CD4-positive, alpha-beta T cell (primary cell): ENCODE measurements at regions of chr21 and their contacts with region 1.

Region 1: DNA sequence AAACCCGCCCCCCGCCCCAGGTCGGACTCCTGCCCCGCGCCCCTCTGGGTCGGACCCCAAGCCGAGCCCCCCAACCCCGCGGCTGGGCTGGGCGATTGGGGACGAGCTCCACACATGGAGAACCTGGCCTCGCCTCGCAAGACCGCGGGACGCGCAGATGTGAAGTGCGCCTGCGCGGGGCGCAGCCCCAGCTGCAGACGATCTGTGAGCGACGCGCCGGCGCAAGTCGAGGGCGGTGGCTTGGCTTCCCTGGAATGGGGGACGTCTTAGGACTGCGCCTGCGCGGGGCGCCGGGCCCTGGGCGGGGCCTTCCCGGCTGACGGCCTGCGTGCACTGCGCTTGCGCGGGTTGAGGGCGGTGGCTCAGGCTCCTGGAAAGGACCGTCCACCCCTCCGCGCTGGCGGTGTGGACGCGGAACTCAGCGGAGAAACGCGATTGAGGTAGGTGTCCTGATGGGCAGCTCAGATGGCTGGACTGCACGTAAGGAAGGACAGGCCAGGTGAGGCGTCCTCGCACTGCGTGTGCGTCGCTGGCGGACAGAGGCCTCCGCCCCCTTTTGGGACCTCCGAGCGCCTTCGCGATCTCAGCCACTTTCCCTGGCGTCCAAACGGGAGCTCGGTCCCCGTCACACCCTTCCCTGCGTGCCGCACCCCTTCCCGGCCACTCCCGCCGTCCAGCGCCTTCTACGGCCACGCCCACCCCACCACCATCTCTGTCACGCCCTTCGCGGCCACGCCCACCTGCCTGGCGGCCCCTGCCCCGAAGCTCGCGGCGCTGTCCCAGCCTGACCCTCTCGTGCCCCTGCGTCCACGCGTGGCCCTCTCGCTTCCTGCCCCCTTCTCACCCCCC is at the start of gene PRMT2:
- DNase-seq: peak; percentile 94 to 99 (median 98)
- ATAC-seq: peak; percentile 84
- H3K4me3 ChIP-seq: peak within 1 kb of the TSS; percentile 100
- H3K4me3 Mint-ChIP-seq: peak within 1 kb of the TSS; percentile 100
- H3K27ac ChIP-seq: peak within 1 kb of the TSS; percentile 94 to 97
- H3K27ac Mint-ChIP-seq: peak within 1 kb of the TSS; percentile 97
- H3K4me1 ChIP-seq: peaks cover 38% of the 10 kb centered on the region
- H3K4me1 Mint-ChIP-seq: peaks cover 86% of the 10 kb centered on the region
- H3K27me3 ChIP-seq: no peaks in the 10 kb centered on the region
- H3K27me3 Mint-ChIP-seq: no peaks in the 10 kb centered on the region
- CTCF ChIP-seq: no peak
- total RNA-seq, gene PRMT2: 97.1 to 101 TPM

Region 2: GRCh38 chr21:46500224-46500856 is 135.2 kb before region 1 on chr21:
- CTCF ChIA-PET with region 1: interaction called, 8 read pairs
- POLR2A ChIA-PET with region 1: interaction called, 12 read pairs
- intact Hi-C with region 1: no loop called
- DNase-seq: peak in 2 of 14 experiments; percentile 19 to 56
- ATAC-seq: peak; percentile 60
- H3K4me3 ChIP-seq: no peak overlapping the region
- H3K4me3 Mint-ChIP-seq: no peak overlapping the region
- H3K27ac ChIP-seq: peak overlapping the region; percentile 4 to 14
- H3K27ac Mint-ChIP-seq: peak overlapping the region; percentile 57
- H3K4me1 ChIP-seq: peaks cover 17% of the 10 kb centered on the region
- H3K4me1 Mint-ChIP-seq: peaks cover 35% of the 10 kb centered on the region
- H3K27me3 ChIP-seq: no peaks in the 10 kb centered on the region
- H3K27me3 Mint-ChIP-seq: no peaks in the 10 kb centered on the region
- CTCF ChIP-seq: no peak

Region 3: DNA sequence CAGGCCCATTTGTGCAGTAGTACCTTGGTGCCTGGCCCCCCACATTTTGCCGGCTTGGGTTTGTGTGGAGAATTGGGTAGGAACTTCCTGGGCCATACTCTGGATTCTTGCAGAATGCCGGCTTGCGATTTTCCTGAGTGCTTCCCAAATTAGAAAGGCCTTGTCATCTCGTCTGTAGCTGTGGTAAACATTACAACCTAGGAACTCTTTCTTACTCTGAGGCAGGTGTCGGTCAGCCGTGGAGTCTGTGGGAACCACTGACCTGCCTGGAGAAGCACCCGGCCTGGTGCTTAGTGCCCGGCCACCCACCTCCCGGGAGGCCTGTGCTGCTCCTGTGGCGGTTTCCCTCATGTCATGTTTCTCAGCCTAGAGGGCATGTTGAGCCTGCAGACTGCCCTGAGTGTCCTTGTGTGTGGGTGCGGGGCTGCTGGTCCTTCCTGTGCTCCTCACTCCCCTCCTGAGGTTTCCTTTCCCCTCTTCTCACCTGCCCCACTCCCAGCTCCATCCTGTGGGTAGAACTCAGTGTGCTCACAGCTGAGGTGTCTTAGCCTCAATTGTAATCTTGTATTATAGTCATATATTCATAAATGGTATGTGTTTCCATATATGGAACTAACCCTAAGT is 95.3 kb before region 1 on chr21:
- CTCF ChIA-PET with region 1: interaction called, 3 read pairs
- POLR2A ChIA-PET with region 1: interaction called, 11 read pairs
- intact Hi-C with region 1: no loop called
- DNase-seq: peak in 2 of 14 experiments; percentile 48 to 77
- ATAC-seq: peak; percentile 65
- H3K4me3 ChIP-seq: no peak overlapping the region
- H3K4me3 Mint-ChIP-seq: peak overlapping the region; percentile 49
- H3K27ac ChIP-seq: peak overlapping the region in 1 of 2 donors; percentile 37
- H3K27ac Mint-ChIP-seq: peak overlapping the region; percentile 82
- H3K4me1 ChIP-seq: peaks cover 14% of the 10 kb centered on the region
- H3K4me1 Mint-ChIP-seq: peaks cover 54% of the 10 kb centered on the region
- H3K27me3 ChIP-seq: no peaks in the 10 kb centered on the region
- H3K27me3 Mint-ChIP-seq: no peaks in the 10 kb centered on the region
- CTCF ChIP-seq: no peak

Region 4: GRCh38 chr21:46559291-46559983 is 76.1 kb before region 1 on chr21:
- CTCF ChIA-PET with region 1: interaction called, 7 read pairs
- POLR2A ChIA-PET with region 1: interaction called, 130 read pairs
- intact Hi-C with region 1: loop called in 1 of 2 experiments (anchors 1 kb)
- DNase-seq: peak; percentile 37 to 85 (median 62)
- ATAC-seq: peak; percentile 84
- H3K4me3 ChIP-seq: peak overlapping the region; percentile 44
- H3K4me3 Mint-ChIP-seq: peak overlapping the region; percentile 65
- H3K27ac ChIP-seq: peak overlapping the region; percentile 72 to 84
- H3K27ac Mint-ChIP-seq: peak overlapping the region; percentile 95
- H3K4me1 ChIP-seq: peaks cover 74% of the 10 kb centered on the region
- H3K4me1 Mint-ChIP-seq: peaks cover 75% of the 10 kb centered on the region
- H3K27me3 ChIP-seq: no peaks in the 10 kb centered on the region
- H3K27me3 Mint-ChIP-seq: no peaks in the 10 kb centered on the region
- CTCF ChIP-seq: no peak

Region 5: GRCh38 chr21:46594276-46594675 is 41.3 kb before region 1 on chr21:
- CTCF ChIA-PET with region 1: no interaction called
- POLR2A ChIA-PET with region 1: no interaction called
- intact Hi-C with region 1: no loop called
- DNase-seq: no peak
- ATAC-seq: no peak
- H3K4me3 ChIP-seq: no peak overlapping the region
- H3K4me3 Mint-ChIP-seq: no peak overlapping the region
- H3K27ac ChIP-seq: no peak overlapping the region
- H3K27ac Mint-ChIP-seq: no peak overlapping the region
- H3K4me1 ChIP-seq: peaks cover 9% of the 10 kb centered on the region
- H3K4me1 Mint-ChIP-seq: peaks cover 9% of the 10 kb centered on the region
- H3K27me3 ChIP-seq: no peaks in the 10 kb centered on the region
- H3K27me3 Mint-ChIP-seq: no peaks in the 10 kb centered on the region
- CTCF ChIP-seq: no peak

Region 6: GRCh38 chr21:46605767-46606426 is 29.7 kb before region 1 on chr21:
- CTCF ChIA-PET with region 1: interaction called, 3 read pairs
- POLR2A ChIA-PET with region 1: interaction called, 18 read pairs
- intact Hi-C with region 1: no loop called
- DNase-seq: peak; percentile 13 to 76 (median 45)
- ATAC-seq: peak; percentile 93
- H3K4me3 ChIP-seq: no peak overlapping the region
- H3K4me3 Mint-ChIP-seq: peak overlapping the region; percentile 38
- H3K27ac ChIP-seq: peak overlapping the region in 1 of 2 donors; percentile 11
- H3K27ac Mint-ChIP-seq: peak overlapping the region; percentile 64
- H3K4me1 ChIP-seq: peaks cover 30% of the 10 kb centered on the region
- H3K4me1 Mint-ChIP-seq: peaks cover 57% of the 10 kb centered on the region
- H3K27me3 ChIP-seq: no peaks in the 10 kb centered on the region
- H3K27me3 Mint-ChIP-seq: no peaks in the 10 kb centered on the region
- CTCF ChIP-seq: no peak

Region 7: DNA sequence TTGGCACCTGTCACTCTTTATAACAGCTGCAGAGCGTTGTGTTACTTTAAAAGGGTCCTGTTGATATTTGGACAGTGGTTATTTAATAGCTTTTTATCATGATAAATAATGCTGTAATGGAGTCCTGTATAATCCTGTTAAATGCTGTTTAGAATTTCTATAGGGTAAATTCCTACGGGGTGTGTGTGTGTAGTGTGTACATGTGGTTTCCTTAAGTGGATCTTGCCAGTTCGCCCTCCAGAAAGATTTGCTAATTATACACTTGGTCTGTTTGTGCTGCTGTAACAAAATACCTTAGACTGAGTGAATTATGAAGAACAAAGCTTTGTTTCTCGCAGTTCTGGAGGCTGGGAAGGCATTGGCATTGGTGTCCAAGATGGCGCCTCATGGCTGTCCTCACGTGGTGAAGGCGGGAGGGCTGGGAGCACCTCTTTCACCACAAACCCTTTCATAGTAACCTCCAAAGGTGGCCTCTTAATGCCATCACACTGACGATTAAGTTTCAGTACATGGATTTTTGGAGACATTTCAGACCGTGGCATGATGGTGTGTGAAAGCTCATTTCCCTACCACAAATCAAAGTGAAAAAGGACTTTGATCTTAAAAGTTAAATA is 11.1 kb after region 1 on chr21:
- CTCF ChIA-PET with region 1: interaction called, 3 read pairs
- POLR2A ChIA-PET with region 1: interaction called, 11 read pairs
- intact Hi-C with region 1: no loop called
- DNase-seq: no peak
- ATAC-seq: no peak
- H3K4me3 ChIP-seq: no peak overlapping the region
- H3K4me3 Mint-ChIP-seq: peak overlapping the region; percentile 38
- H3K27ac ChIP-seq: no peak overlapping the region
- H3K27ac Mint-ChIP-seq: peak overlapping the region; percentile 66
- H3K4me1 ChIP-seq: peaks cover 31% of the 10 kb centered on the region
- H3K4me1 Mint-ChIP-seq: peaks cover 53% of the 10 kb centered on the region
- H3K27me3 ChIP-seq: no peaks in the 10 kb centered on the region
- H3K27me3 Mint-ChIP-seq: no peaks in the 10 kb centered on the region
- CTCF ChIP-seq: no peak